ENCODE measurements at regions of chr1 and their contacts with region 1.

Region 1: GRCh38 chr1:244047621-244048471 is 3.2 kb upstream of the ZBTB18 start:
- DNase-seq: peak; percentile 99
- H3K4me3 ChIP-seq: peak overlapping the region; percentile 79 to 83
- H3K27ac ChIP-seq: peak overlapping the region; percentile 99 to 100
- H3K4me1 ChIP-seq: no peaks in the 10 kb centered on the region
- H3K27me3 ChIP-seq: no peaks in the 10 kb centered on the region
- CTCF ChIP-seq: no peak
- POLR2A ChIP-seq: peak; percentile 96

Region 2: DNA sequence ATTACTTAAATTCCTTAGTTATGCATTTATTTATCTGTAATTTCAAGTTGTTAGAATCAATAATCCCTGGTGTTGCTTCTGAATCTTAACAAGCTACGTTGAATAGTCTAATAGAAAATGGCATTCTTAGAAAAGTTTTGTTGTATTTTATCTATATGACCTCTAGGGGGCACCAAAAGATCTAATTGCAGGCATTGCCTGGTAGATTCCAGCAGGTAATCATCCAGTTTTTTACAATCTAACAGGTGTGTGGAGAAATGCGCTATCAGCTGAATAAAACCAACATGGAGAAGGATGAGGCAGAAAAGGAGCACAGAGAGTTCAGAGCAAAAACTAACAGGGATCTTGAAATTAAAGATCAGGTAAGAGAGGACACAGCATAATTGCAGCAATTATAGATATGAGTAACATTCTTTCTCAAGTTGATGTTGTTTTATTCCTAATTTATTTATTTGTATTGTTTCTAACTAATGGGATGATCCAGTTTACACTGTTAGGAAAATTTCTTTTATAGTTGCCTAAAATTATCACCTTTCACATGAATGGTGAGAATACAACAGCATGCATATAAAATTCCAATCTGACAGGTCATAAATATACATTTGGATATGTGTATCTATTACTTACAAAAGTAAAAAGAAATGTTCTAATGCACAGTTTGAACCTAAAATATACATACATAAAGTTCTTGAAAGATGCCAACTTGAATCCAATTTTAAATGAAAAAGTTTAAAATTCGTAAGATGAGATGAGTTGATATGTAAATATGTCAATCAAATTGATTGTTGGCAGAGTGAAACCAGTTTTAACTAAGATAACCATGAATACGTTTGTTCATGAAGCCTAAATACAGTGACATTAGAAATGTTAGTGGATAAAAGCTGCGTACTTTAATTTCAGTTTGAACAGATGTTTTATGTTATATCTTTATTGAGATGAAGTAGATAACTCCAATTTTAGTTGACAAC is 703.6 kb before region 1 on chr1:
- intact Hi-C with region 1: loop called (anchors 10 kb)
- DNase-seq: no peak
- H3K4me3 ChIP-seq: no peak overlapping the region
- H3K27ac ChIP-seq: no peak overlapping the region
- H3K4me1 ChIP-seq: no peaks in the 10 kb centered on the region
- H3K27me3 ChIP-seq: no peaks in the 10 kb centered on the region
- CTCF ChIP-seq: peak; percentile 51 to 87 (median 76)
- POLR2A ChIP-seq: no peak

Region 3: DNA sequence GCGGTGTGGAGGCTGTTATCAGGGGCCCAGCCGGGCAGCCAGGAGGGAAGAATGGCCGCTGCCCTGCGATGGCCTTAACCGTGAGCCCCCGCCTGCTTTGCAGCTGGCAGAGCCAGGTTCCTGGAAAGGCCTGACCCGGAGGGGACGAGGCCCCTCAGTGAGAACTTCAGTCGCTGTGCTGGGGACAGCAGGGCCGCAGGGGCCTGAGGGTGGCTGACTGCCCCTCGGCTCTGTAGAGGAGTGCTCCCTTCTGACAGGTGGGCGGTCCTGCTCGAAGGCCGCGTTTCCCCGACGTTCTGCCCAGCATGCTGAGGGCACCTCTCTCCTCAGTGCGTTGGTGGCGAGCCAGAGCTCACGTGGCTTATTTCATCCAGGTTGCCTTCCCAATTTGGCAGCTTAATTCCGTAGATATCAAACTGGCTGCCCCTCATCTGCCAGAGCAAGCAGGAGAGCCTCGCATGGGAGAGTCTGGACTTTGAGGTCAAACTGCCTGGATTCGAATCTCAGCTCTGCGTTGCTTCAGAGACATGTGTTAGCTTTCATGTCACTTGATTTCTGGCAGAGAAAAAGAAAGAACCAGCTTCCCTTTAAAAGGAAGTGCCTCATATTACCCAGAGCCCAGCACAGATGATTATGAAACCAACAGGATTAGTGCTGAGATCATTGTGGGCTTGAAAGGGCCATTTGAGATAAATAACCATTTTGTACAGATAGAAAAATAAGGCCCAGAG is 552.2 kb before region 1 on chr1:
- intact Hi-C with region 1: loop called (anchors 10 kb)
- DNase-seq: no peak
- H3K4me3 ChIP-seq: no peak overlapping the region
- H3K27ac ChIP-seq: peak overlapping the region; percentile 35 to 37
- H3K4me1 ChIP-seq: no peaks in the 10 kb centered on the region
- H3K27me3 ChIP-seq: no peaks in the 10 kb centered on the region
- CTCF ChIP-seq: no peak
- POLR2A ChIP-seq: no peak

Region 4: GRCh38 chr1:243831463-243831862 is 216.4 kb before region 1 on chr1:
- intact Hi-C with region 1: no loop called
- DNase-seq: no peak
- H3K4me3 ChIP-seq: no peak overlapping the region
- H3K27ac ChIP-seq: no peak overlapping the region
- H3K4me1 ChIP-seq: no peaks in the 10 kb centered on the region
- H3K27me3 ChIP-seq: no peaks in the 10 kb centered on the region
- CTCF ChIP-seq: no peak
- POLR2A ChIP-seq: no peak

Region 5: DNA sequence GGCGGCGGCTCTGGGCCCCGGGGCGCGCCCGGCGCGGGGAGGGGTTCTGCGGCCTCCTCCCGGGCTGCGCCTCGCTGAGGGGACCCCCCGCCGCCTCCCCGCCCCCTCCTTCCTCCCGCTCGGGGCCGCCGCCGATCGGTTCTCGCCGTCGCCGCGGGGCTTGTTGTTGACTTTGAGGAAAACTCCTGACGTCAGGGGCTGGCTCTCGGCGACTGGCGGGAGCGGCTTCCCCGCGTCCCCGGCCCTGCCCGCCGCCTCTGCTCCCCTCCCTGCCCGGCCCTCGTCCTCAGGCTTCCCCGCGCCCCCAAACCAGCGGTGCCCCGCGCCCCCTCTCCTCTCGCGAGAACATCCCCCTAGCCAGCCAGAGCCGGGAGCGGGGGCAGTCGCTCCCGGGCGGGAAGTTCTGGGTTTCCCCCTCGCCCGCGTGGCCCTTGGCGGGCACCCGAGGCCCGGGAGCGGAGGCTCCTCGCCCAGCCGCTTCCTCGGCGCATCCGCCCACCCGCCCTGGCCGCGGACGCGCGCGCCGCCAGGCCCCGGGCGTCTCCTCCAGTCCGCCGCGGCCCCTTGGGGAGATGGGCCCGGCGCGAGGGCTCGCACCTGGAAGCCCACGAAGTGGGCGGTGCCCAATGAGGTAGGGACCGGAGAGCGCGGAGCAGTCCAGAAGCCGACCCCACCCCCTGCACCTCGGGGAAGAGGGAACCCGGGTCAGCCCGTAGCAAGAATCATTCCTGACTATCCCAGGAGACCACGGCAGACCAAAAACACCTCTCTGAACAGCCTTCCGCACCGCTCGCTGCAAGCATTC is 197.2 kb before region 1 on chr1:
- intact Hi-C with region 1: loop called (anchors 2 kb)
- DNase-seq: peak; percentile 77
- H3K4me3 ChIP-seq: peak overlapping the region; percentile 89 to 91
- H3K27ac ChIP-seq: peak overlapping the region; percentile 99
- H3K4me1 ChIP-seq: no peaks in the 10 kb centered on the region
- H3K27me3 ChIP-seq: no peaks in the 10 kb centered on the region
- CTCF ChIP-seq: no peak
- POLR2A ChIP-seq: peak; percentile 69

Region 6: DNA sequence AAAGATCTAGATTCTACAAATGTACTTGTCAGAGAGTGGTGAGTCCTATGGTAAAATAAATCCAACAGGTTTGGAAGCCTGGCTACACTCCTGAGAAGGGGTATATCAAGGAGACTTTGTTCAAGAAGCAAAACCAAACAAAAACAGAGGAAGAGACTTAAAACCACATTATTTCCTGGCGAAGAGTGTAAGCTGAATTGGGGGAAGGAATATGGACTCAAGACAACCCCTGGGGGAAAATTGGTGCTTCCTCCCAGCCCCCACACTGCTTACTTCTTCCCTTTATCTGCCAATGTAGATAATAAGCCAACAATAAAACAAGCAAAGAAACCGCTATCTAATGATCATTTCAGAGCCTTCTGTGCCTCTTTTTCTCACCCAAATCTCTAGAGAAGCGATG is 45.1 kb before region 1 on chr1:
- intact Hi-C with region 1: no loop called
- DNase-seq: no peak
- H3K4me3 ChIP-seq: no peak overlapping the region
- H3K27ac ChIP-seq: no peak overlapping the region
- H3K4me1 ChIP-seq: no peaks in the 10 kb centered on the region
- H3K27me3 ChIP-seq: no peaks in the 10 kb centered on the region
- CTCF ChIP-seq: no peak
- POLR2A ChIP-seq: no peak

Region 7: GRCh38 chr1:244074559-244075171 is 26.8 kb after region 1 on chr1:
- intact Hi-C with region 1: no loop called
- DNase-seq: no peak
- H3K4me3 ChIP-seq: no peak overlapping the region
- H3K27ac ChIP-seq: no peak overlapping the region
- H3K4me1 ChIP-seq: peaks cover 3% of the 10 kb centered on the region
- H3K27me3 ChIP-seq: no peaks in the 10 kb centered on the region
- CTCF ChIP-seq: no peak
- POLR2A ChIP-seq: no peak

Region 8: GRCh38 chr1:244163861-244164562 is 116.2 kb after region 1 on chr1:
- intact Hi-C with region 1: loop called (anchors 5 kb)
- DNase-seq: no peak
- H3K4me3 ChIP-seq: no peak overlapping the region
- H3K27ac ChIP-seq: no peak overlapping the region
- H3K4me1 ChIP-seq: no peaks in the 10 kb centered on the region
- H3K27me3 ChIP-seq: no peaks in the 10 kb centered on the region
- CTCF ChIP-seq: no peak
- POLR2A ChIP-seq: no peak

Region 9: GRCh38 chr1:244214009-244214967 is 166.4 kb after region 1 on chr1:
- intact Hi-C with region 1: loop called (anchors 2 kb)
- DNase-seq: peak; percentile 11
- H3K4me3 ChIP-seq: no peak overlapping the region
- H3K27ac ChIP-seq: peak overlapping the region in 1 of 2 donors; percentile 26
- H3K4me1 ChIP-seq: peaks cover 5% of the 10 kb centered on the region
- H3K27me3 ChIP-seq: no peaks in the 10 kb centered on the region
- CTCF ChIP-seq: no peak
- POLR2A ChIP-seq: no peak

Region 10: GRCh38 chr1:244272471-244273261 is 224.8 kb after region 1 on chr1:
- intact Hi-C with region 1: loop called (anchors 5 kb)
- DNase-seq: peak; percentile 65
- H3K4me3 ChIP-seq: no peak overlapping the region
- H3K27ac ChIP-seq: no peak overlapping the region
- H3K4me1 ChIP-seq: no peaks in the 10 kb centered on the region
- H3K27me3 ChIP-seq: no peaks in the 10 kb centered on the region
- CTCF ChIP-seq: peak; percentile 87 to 98 (median 94)
- POLR2A ChIP-seq: no peak